Activated CD4-positive, alpha-beta T cell treated with anti-CD3 and anti-CD28 coated beads for 36 hours (primary cell): ENCODE measurements at regions of chr16 and their contacts with region 1.

Region 1: GRCh38 chr16:87507351-87508069 is 14.7 kb upstream of the ZCCHC14 start:
- DNase-seq: no peak
- ATAC-seq: no peak
- H3K4me3 Mint-ChIP-seq: no peak overlapping the region
- H3K27ac Mint-ChIP-seq: no peak overlapping the region
- H3K4me1 Mint-ChIP-seq: peaks cover 5% of the 10 kb centered on the region
- H3K27me3 Mint-ChIP-seq: peaks cover 19% of the 10 kb centered on the region

Region 2: DNA sequence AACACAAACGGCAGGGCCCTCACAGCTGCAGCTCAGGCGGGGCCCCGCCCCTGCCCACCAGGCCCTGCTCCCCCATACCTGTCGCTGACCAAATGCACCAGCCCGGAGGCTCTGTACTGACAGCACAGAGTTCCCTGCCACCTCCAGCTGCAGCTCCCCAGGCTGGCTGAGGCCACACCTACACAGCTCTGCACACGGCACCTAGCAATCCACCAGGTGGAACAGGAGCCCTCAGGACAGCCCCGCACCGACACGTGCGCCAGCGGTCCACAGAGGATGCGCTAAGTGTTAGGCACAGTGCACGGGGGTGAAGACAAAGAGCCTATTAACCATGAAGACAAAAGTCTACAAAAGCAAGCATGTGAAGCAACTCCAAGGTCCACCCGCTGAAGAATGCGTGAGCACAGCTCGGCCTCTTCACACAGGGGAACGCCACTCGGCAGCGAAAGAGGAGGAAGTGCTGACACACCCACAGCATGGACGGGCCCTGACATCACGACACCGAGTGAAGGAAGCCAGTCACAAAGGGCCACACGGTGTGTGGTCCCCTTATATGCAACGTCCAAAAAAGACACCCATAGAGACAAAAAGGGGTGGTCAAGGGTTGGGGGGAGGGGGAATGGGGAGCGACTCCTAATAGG is 20.0 kb before region 1 on chr16:
- CTCF ChIA-PET with region 1: no interaction called
- POLR2A ChIA-PET with region 1: no interaction called
- intact Hi-C with region 1: no loop called
- DNase-seq: peak; percentile 43
- ATAC-seq: no peak
- H3K4me3 Mint-ChIP-seq: peak overlapping the region; percentile 18
- H3K27ac Mint-ChIP-seq: no peak overlapping the region
- H3K4me1 Mint-ChIP-seq: peaks cover 75% of the 10 kb centered on the region
- H3K27me3 Mint-ChIP-seq: no peaks in the 10 kb centered on the region

Region 3: DNA sequence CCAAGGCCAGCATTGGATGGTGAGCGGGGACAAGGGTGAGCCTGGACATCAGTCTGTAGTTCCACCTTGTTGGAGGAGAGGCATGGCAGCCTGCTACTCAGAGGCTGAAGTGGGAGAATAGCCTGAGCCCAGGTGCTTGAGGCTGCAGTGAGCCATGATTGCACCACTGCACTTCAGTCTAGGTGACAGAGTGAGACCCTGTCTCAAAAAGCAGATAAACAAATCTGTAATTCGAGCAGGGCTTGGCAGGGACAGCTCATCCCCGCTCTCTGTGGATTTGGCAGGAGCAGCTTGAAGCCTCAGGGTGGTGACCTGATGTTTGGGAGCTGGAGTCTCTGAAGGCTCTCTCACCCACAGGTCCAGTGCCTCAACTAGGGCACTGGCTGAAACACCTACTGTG is 23.9 kb after region 1 on chr16:
- CTCF ChIA-PET with region 1: no interaction called
- POLR2A ChIA-PET with region 1: no interaction called
- intact Hi-C with region 1: loop called in 1 of 2 experiments (anchors 2 kb)
- DNase-seq: no peak
- ATAC-seq: no peak
- H3K4me3 Mint-ChIP-seq: no peak overlapping the region
- H3K27ac Mint-ChIP-seq: no peak overlapping the region
- H3K4me1 Mint-ChIP-seq: no peaks in the 10 kb centered on the region
- H3K27me3 Mint-ChIP-seq: peaks cover 24% of the 10 kb centered on the region

Region 4: GRCh38 chr16:87844120-87844733 is 336.7 kb after region 1 on chr16:
- CTCF ChIA-PET with region 1: no interaction called
- POLR2A ChIA-PET with region 1: no interaction called
- intact Hi-C with region 1: no loop called
- DNase-seq: no peak
- ATAC-seq: no peak
- H3K4me3 Mint-ChIP-seq: no peak overlapping the region
- H3K27ac Mint-ChIP-seq: no peak overlapping the region
- H3K4me1 Mint-ChIP-seq: peaks cover 6% of the 10 kb centered on the region
- H3K27me3 Mint-ChIP-seq: no peaks in the 10 kb centered on the region